Activated CD4-positive, alpha-beta memory T cell treated with anti-CD3 and anti-CD28 coated beads for 36 hours (primary cell): ENCODE measurements at regions of chr3 and their contacts with region 1.

Region 1: DNA sequence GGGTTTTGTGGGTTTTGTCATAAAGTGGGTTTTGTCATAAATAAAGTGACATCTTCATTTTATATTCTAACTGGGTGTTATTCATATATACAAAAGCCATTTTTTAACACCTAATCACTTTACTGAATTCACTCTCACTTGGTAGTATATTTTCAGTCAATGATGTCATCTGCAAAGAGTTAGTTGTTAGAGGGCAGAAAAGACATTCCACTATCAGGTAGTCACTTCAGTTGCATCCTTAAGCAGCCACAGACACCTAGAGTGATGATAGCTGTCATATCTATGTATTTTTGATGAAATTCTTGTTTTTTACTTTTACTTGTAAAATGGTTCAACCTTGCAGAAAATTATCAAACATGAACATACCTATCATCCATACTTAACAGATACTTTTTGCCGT is 89.0 kb downstream of the DHX36 start:
- DNase-seq: no peak
- H3K4me3 Mint-ChIP-seq: no peak overlapping the region
- H3K27ac Mint-ChIP-seq: no peak overlapping the region
- H3K4me1 Mint-ChIP-seq: peaks cover 13% of the 10 kb centered on the region
- H3K27me3 Mint-ChIP-seq: peaks cover 24% of the 10 kb centered on the region

Region 2: DNA sequence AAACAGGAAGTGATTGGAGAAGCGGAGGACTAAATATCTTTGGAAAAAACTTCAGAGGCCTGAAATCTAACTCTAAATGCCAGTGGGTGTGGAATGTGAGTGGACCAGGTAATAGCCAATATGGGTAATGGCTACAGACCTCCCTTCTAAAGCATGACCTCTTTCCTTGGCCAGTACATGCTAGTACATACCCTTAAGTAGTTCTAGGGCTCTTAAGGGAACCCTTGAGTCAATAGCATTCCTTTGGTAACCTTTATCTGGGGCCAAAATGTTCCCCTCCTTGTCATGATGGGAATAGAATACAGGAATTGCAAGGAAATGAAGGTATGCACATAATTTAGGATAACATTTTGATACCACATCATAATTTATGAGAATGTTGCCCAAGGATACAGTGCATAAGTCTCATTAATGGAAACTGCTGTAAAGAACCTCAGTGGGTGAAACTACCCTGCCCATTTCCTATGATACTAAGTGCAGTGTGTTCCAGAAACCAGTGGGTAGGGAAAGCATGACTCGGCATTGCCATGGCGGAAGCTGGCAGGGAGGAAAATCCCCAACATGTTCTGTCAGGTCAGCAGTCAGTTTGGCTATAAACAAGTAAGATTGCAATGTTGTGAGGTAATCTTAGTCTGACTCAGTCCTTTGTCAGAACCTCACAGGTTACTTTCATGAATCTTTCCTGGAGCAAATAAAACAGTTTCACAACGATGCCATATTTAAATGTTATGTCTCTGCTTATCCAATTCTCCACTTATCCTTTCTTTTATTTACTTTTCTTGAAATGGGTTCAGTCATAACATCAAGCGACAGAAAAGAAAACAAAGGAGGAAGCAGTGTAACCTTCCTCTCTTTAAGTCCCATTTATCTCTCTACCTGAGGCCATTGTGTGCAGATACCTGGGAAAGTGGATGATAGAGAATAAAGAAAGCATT is 1096.8 kb before region 1 on chr3:
- CTCF ChIA-PET with region 1: no interaction called
- POLR2A ChIA-PET with region 1: no interaction called
- intact Hi-C with region 1: loop called (anchors 2 kb)
- DNase-seq: peak; percentile 91
- H3K4me3 Mint-ChIP-seq: no peak overlapping the region
- H3K27ac Mint-ChIP-seq: peak overlapping the region; percentile 73
- H3K4me1 Mint-ChIP-seq: peaks cover 35% of the 10 kb centered on the region
- H3K27me3 Mint-ChIP-seq: peaks cover 5% of the 10 kb centered on the region

Region 3: GRCh38 chr3:154040286-154040685 is 195.0 kb before region 1 on chr3:
- CTCF ChIA-PET with region 1: no interaction called
- POLR2A ChIA-PET with region 1: no interaction called
- intact Hi-C with region 1: loop called (anchors 5 kb)
- DNase-seq: no peak
- H3K4me3 Mint-ChIP-seq: no peak overlapping the region
- H3K27ac Mint-ChIP-seq: no peak overlapping the region
- H3K4me1 Mint-ChIP-seq: no peaks in the 10 kb centered on the region
- H3K27me3 Mint-ChIP-seq: peaks cover 1% of the 10 kb centered on the region

Region 4: DNA sequence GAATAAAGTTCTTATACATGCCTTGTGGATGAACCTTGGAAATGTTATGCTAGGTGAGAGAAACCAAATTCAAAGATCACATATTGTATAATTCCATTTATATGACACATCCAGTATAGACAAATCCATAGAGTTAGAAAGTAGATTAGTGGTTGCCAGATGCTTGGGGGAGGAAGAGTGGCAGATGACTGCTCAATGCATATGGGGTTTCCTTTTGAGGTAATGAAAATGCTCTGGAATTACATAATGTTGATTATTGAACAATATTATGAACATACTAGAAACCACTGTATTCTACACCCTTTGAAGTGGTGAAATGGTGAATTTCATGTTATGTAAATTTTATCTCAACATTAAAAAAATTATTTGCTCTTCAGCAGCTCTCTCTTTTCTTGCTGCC is 11.8 kb before region 1 on chr3:
- CTCF ChIA-PET with region 1: interaction called, 3 read pairs
- POLR2A ChIA-PET with region 1: interaction called, 4 read pairs
- intact Hi-C with region 1: loop called (anchors 1 kb)
- DNase-seq: no peak
- H3K4me3 Mint-ChIP-seq: no peak overlapping the region
- H3K27ac Mint-ChIP-seq: no peak overlapping the region
- H3K4me1 Mint-ChIP-seq: peaks cover 3% of the 10 kb centered on the region
- H3K27me3 Mint-ChIP-seq: peaks cover 4% of the 10 kb centered on the region

Region 5: DNA sequence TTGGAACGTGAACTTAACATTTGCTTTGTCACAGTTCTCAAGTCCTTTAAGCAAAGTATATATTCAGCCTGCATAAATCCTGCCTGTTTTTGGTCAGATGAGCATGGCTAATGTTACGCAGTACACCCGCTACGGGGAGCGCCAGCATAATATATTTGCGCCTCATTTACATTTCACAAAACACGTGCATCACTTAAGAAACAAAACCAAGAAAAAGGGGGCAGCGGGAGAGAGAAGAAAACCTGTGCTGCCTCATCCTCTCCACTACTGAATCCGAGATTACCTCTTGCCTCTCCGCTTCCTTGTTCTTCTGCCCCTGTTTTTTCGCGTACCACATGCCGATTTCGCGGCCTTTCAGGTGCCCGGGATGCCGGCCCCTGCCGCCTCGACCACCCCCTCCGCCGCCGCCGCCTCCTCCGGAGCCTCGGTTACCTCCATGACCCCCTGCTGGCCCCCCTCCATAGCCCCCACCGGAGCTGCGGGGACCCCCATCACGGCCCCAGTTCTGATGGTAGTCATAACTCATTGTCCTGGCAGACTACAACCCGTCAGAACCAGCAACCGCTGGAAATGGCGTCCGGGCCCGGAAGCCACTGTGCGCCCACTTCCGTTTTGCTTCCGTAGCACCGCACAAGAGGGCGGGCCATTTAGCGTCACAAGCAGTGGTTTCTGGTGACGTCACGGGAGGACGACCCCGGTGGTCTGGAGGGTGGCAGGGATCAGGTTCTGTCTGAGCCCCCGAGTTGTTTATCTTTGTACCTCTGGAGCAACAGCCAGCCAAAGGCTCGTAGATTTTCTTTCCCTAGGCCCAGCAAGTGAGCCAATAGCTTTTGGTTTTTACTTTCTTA is 88.8 kb after region 1 on chr3 and contains the start of gene DHX36:
- CTCF ChIA-PET with region 1: no interaction called
- POLR2A ChIA-PET with region 1: no interaction called
- intact Hi-C with region 1: loop called (anchors 1 kb)
- DNase-seq: peak; percentile 93
- H3K4me3 Mint-ChIP-seq: peak within 1 kb of the TSS; percentile 85
- H3K27ac Mint-ChIP-seq: peak within 1 kb of the TSS; percentile 96
- H3K4me1 Mint-ChIP-seq: peaks cover 29% of the 10 kb centered on the region
- H3K27me3 Mint-ChIP-seq: no peaks in the 10 kb centered on the region
- total RNA-seq, gene DHX36: 65.5 to 71.1 TPM